ENCODE measurements at regions of chr15 and their contacts with region 1.

Region 1: GRCh38 chr15:43185157-43186017 is at the start of gene CCNDBP1:
- DNase-seq: peak; percentile 71 to 97 (median 82)

Region 2: GRCh38 chr15:43067717-43068461 is 117.5 kb before region 1 on chr15:
- intact Hi-C with region 1: no loop called
- DNase-seq: no peak

Region 3: DNA sequence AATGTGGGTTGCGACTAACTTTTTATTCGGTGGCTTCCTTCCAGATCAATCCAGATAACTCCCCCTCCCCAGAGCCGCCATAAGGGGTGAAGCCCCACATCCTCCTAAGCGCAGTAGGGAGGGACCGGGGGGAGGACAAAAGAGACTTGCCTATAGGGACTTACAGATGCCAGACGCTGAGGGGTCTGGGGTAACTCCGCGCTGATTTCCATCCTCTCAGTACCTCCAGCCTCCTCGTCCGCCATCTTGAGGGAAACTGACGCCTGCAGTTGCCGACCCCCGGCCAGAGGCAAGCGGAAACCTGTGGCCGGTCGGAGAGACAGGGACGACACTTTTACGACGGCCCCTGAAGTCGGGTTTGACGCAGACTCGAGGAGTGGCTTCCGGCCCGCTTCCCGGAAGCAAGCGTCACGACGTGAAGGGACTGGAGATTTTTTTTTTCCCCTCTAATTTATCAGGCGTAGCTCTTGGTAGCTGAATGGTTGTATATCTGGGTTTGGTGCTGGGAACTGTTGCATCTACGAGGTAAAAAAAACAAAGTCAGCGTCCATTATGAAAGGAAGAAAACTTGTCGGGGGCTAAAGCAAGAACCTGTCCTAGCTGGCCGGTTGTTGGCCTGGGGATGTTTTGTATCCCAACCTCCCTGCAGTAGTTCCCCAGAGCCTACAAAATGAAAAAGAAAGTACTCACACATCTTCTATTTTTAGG is 79.5 kb before region 1 on chr15 and contains the start of gene UBR1:
- intact Hi-C with region 1: loop called (anchors 10 kb)
- DNase-seq: peak; percentile 84 to 98 (median 88)

Region 4: GRCh38 chr15:43285609-43286037 is 100.2 kb after region 1 on chr15:
- intact Hi-C with region 1: loop called (anchors 5 kb)
- DNase-seq: peak in 3 of 10 donors; percentile 31 to 57 (median 38)

Measured in posterior cingulate gyrus (tissue), 11 donors.